Activated CD4-positive, alpha-beta T cell treated with anti-CD3 and anti-CD28 coated beads, Interleukin-2, amount 10 ng/mL, durations not matched to agents 24 days and 14 days (primary cell): ENCODE measurements at regions of chr6 and their contacts with region 1.

Region 1: DNA sequence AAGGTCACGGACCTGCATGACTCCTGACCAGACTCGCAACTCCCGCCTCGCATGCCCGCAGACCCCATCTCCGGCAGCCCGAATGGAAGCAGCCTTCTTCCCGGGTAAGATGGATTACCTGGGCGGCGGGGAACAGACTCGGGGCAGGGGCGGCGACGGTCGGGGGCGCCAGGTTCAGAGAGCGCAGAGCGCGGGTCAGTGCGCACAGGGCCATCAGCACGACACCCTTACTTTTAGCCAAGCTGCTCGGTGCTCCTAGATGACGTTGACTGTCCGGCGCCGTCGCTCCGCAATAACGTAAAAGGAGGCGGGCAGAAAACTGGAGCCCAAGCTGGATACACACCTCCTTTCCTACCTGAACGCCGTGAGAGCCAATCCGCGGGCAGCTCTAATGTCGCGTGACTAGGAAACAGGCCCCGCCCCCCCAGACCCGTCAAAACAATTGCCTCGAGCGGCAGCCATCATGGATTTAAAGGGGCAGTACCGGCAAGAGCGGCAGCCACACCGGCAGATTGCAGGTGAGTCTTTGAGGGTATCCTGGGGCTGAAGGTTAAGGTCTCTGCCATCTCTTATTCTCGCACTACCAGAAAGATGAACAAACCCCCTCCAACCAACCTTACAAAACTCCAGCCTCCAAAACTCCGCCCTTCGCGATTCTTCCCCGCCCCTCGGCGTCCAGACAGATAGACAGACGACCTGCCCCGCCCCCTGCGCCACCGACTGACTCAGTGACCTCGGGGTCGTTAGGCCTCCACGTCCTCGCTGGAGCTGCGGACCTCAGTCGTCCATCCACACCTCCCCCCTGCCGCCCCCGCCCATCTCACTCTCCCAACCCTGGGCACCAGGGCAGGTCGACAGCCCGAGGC is at the starts of genes KLC4 and MRPL2:
- DNase-seq: peak; percentile 99
- H3K4me3 Mint-ChIP-seq: peak within 1 kb of the TSS; percentile 99
- H3K27ac Mint-ChIP-seq: peak within 1 kb of the TSS; percentile 98
- H3K4me1 Mint-ChIP-seq: peaks cover 35% of the 10 kb centered on the region
- H3K27me3 Mint-ChIP-seq: no peaks in the 10 kb centered on the region
- total RNA-seq, gene KLC4: 9.5 and 10.7 TPM in 2 replicates
- total RNA-seq, gene MRPL2: 83.8 and 103 TPM in 2 replicates

Region 2: DNA sequence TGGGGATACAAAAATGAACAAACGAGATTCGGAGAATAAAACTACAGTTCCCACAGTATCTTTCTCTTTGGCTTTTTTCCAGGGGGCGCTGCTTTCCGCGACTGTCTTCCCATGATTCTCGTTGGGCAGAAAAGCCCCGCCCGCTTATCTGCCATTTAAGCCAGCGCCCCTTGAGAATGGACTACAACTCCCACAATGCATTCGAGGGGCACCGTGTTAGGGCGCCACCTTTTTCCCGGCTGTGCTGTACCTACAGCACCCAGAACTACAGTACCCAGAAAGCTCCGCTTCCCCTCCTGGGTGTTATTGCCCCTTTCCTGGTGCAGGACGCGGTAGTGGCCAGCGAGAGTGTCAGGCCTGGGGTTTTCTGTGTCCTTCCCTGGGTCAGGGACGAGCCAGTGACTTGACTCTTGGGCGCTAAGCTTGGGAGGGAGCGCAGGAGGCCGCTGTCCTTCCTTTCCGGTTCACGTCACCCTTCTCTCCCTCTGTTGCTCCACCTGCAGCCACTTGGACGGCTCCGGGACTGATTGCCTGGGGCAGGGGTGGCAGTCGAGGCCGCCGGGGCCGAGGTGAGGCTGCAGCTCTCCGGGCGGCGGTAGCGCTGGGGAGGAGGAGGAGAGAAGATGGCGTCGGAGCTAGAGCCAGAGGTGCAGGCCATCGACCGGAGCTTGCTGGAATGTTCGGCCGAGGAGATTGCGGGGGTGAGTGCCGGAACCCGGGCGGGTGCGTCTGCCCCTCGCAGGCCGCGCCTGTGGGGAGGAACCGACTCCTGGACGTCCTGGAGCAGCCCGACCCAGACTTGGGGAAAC is 495.5 kb before region 1 on chr6 and contains the start of gene UBR2:
- intact Hi-C with region 1: loop called (anchors 10 kb)
- DNase-seq: peak; percentile 98
- H3K4me3 Mint-ChIP-seq: peak within 1 kb of the TSS; percentile 99
- H3K27ac Mint-ChIP-seq: peak within 1 kb of the TSS; percentile 93
- H3K4me1 Mint-ChIP-seq: peaks cover 25% of the 10 kb centered on the region
- H3K27me3 Mint-ChIP-seq: peaks cover 2% of the 10 kb centered on the region
- total RNA-seq, gene UBR2: 30.1 and 30.8 TPM in 2 replicates

Region 3: GRCh38 chr6:42642794-42643193 is 416.6 kb before region 1 on chr6:
- intact Hi-C with region 1: no loop called
- DNase-seq: no peak
- H3K4me3 Mint-ChIP-seq: no peak overlapping the region
- H3K27ac Mint-ChIP-seq: no peak overlapping the region
- H3K4me1 Mint-ChIP-seq: peaks cover 6% of the 10 kb centered on the region
- H3K27me3 Mint-ChIP-seq: no peaks in the 10 kb centered on the region

Region 4: DNA sequence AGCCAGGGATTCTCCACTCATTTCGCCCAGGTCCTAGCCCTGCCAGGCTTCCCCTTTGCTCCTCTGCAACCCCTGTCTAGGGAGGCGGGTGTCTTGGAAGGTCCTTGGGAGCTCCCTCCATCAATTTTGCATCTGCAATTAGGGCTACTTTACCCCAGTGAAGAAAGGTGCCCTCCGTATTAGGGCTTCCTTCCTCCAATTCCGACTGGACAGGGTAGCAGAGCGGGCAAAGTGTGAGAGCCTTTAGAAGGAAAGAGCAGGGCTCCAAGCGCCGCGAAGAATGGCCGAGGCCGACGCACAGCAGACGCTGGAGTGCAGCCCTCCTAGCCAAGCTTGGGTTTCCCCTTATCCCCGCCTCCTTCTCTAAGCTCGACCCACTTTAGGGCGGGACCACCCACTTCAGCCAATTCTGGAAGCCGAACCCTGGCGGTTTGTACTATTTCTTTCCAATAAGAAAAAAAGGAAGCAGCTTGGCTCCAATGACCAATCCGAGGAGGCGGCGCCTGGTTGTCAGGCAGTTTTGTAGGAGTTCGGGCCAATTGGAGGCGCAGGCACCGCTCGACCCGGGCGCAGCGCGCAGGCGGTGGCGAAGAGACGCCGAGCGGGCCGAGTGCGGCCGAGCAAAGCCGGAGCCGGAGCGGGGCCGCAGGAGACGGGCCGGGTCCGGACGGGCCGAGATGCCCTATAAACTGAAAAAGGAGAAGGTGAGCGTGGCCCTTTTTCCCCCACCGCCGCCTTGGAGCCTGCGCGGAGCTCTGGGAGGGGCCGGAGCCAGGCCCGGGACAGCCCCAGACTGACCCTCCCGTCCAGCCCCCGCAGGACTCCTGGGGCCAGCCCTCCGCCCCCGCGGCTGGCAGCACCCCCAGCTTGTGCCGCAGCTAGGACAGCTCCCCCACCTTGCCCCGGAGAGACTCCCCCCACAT is 75.1 kb before region 1 on chr6 and contains the start of gene PPP2R5D:
- intact Hi-C with region 1: loop called (anchors 2 kb)
- DNase-seq: peak; percentile 99
- H3K4me3 Mint-ChIP-seq: peak within 1 kb of the TSS; percentile 98
- H3K27ac Mint-ChIP-seq: peak within 1 kb of the TSS; percentile 91
- H3K4me1 Mint-ChIP-seq: peaks cover 54% of the 10 kb centered on the region
- H3K27me3 Mint-ChIP-seq: no peaks in the 10 kb centered on the region
- total RNA-seq, gene PPP2R5D: 54.2 and 54.6 TPM in 2 replicates